Breast epithelium (tissue), 4 donors: ENCODE measurements at regions of chr5 and their contacts with region 1.

Region 1: GRCh38 chr5:58565033-58565432 is 17.8 kb upstream of the RAB3C start:
- DNase-seq: no peak
- H3K4me3 ChIP-seq: no peak overlapping the region
- H3K27ac ChIP-seq: no peak overlapping the region
- H3K4me1 ChIP-seq: no peaks in the 10 kb centered on the region
- H3K27me3 ChIP-seq: no peaks in the 10 kb centered on the region
- CTCF ChIP-seq: no peak
- POLR2A ChIP-seq: no peak

Region 2: DNA sequence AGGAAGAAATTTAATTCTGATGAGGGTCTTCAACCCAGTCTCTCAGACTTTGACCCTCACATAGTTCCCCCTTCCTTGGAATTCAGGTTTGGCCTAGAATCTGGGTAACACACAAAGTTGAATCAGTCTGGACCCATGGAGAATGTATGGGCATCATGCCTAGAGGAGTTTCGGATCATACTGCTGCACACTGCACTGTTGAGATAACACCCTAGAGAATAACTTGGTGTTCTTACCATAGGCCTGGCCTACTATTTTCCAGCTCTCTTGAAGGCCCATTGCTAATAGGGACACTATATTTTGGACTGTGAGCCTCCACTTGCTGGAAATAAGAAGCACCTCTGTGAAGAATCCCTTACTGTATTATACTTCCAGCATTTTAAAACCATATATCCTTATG is 518.7 kb before region 1 on chr5:
- intact Hi-C with region 1: no loop called
- DNase-seq: no peak
- H3K4me3 ChIP-seq: no peak overlapping the region
- H3K27ac ChIP-seq: no peak overlapping the region
- H3K4me1 ChIP-seq: no peaks in the 10 kb centered on the region
- H3K27me3 ChIP-seq: no peaks in the 10 kb centered on the region
- CTCF ChIP-seq: no peak
- POLR2A ChIP-seq: no peak

Region 3: GRCh38 chr5:58273711-58274110 is 291.3 kb before region 1 on chr5:
- intact Hi-C with region 1: loop called (anchors 5 kb)
- DNase-seq: no peak
- H3K4me3 ChIP-seq: no peak overlapping the region
- H3K27ac ChIP-seq: no peak overlapping the region
- H3K4me1 ChIP-seq: no peaks in the 10 kb centered on the region
- H3K27me3 ChIP-seq: no peaks in the 10 kb centered on the region
- CTCF ChIP-seq: no peak
- POLR2A ChIP-seq: no peak

Region 4: GRCh38 chr5:60522292-60522905 is 1957.4 kb after region 1 on chr5:
- intact Hi-C with region 1: no loop called
- DNase-seq: no peak
- H3K4me3 ChIP-seq: no peak overlapping the region
- H3K27ac ChIP-seq: no peak overlapping the region
- H3K4me1 ChIP-seq: no peaks in the 10 kb centered on the region
- H3K27me3 ChIP-seq: no peaks in the 10 kb centered on the region
- CTCF ChIP-seq: no peak
- POLR2A ChIP-seq: no peak